ENCODE measurements at regions of chr1 and their contacts with region 1.

Region 1: GRCh38 chr1:96362623-96363022 is 359.0 kb upstream of the PTBP2 start:
- DNase-seq: peak; percentile 97
- H3K4me3 Mint-ChIP-seq: no peak overlapping the region
- H3K27ac Mint-ChIP-seq: peak overlapping the region; percentile 72
- H3K4me1 Mint-ChIP-seq: peaks cover 44% of the 10 kb centered on the region
- H3K27me3 Mint-ChIP-seq: no peaks in the 10 kb centered on the region
- CTCF ChIP-seq: no peak

Region 2: GRCh38 chr1:96309783-96310182 is 52.8 kb before region 1 on chr1:
- CTCF ChIA-PET with region 1: no interaction called
- POLR2A ChIA-PET with region 1: interaction called, 7 read pairs
- intact Hi-C with region 1: loop called (anchors 1 kb)
- DNase-seq: peak; percentile 86
- H3K4me3 Mint-ChIP-seq: no peak overlapping the region
- H3K27ac Mint-ChIP-seq: no peak overlapping the region
- H3K4me1 Mint-ChIP-seq: peaks cover 22% of the 10 kb centered on the region
- H3K27me3 Mint-ChIP-seq: no peaks in the 10 kb centered on the region
- CTCF ChIP-seq: no peak

Region 3: DNA sequence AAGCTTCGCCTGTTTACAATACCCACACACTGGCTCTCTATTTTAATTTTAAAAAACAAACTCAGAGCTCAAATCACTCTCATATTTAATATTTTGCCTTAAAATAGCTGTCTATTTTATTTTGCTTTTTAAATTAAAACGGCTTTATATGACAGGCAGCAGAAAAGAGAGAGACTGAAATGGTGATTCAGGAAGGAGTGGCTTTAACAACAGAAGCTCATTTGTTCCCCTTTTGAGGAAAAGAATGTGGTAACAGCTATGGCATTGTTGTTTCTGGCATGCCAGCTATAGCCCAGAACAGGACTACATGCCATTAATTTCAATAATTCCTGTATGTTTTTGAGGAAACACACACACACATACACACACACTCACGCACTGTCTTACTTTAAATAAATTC is 124.8 kb after region 1 on chr1:
- CTCF ChIA-PET with region 1: no interaction called
- POLR2A ChIA-PET with region 1: no interaction called
- intact Hi-C with region 1: loop called (anchors 5 kb)
- DNase-seq: peak; percentile 68
- H3K4me3 Mint-ChIP-seq: peak overlapping the region; percentile 38
- H3K27ac Mint-ChIP-seq: peak overlapping the region; percentile 79
- H3K4me1 Mint-ChIP-seq: peaks cover 34% of the 10 kb centered on the region
- H3K27me3 Mint-ChIP-seq: no peaks in the 10 kb centered on the region
- CTCF ChIP-seq: no peak

Region 4: GRCh38 chr1:96559707-96560596 is 197.3 kb after region 1 on chr1:
- CTCF ChIA-PET with region 1: no interaction called
- POLR2A ChIA-PET with region 1: no interaction called
- intact Hi-C with region 1: loop called (anchors 1 kb)
- DNase-seq: peak; percentile 83
- H3K4me3 Mint-ChIP-seq: peak overlapping the region; percentile 51
- H3K27ac Mint-ChIP-seq: peak overlapping the region; percentile 92
- H3K4me1 Mint-ChIP-seq: peaks cover 17% of the 10 kb centered on the region
- H3K27me3 Mint-ChIP-seq: no peaks in the 10 kb centered on the region
- CTCF ChIP-seq: no peak

Region 5: DNA sequence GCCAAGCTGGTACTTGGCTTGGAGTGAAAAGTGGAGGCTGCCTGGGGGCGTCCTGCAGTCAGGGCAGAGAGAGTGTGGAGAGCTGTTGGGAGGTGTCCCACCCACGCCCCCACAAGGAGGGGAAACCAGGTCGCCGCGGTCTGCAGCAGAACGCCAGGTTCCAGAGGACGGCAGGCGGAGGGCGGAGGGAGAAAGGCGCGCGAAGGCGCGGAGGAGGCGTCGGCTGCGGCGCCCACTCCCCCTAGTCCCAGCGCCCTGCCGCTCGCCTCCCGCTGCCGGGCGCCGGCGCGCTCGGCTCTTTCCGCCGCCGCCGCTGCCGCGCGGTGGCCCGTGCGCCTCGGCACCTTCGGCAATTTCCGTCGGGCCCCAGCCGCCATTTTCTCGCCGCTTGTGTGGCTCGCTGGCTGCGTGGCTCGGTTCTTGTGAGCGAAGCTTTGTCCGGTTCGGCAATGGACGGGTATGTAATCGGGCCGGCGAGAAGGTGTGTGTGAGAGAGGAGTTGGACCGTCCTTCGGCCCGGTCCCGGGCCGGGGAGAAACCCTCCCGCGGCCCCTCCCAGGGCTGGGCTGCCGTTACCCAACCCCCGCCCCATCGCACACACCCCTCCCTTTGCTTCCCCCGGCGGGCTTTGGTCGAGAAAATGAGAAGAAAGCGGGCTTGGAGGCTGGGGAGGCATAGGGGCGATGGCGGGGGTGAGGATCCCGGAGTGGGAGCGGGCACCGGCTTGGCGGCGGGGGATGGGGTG is 359.0 kb after region 1 on chr1 and contains the start of gene PTBP2:
- CTCF ChIA-PET with region 1: no interaction called
- POLR2A ChIA-PET with region 1: interaction called, 6 read pairs
- intact Hi-C with region 1: loop called (anchors 5 kb)
- DNase-seq: peak; percentile 77
- H3K4me3 Mint-ChIP-seq: peak within 1 kb of the TSS; percentile 89
- H3K27ac Mint-ChIP-seq: peak within 1 kb of the TSS; percentile 97
- H3K4me1 Mint-ChIP-seq: peaks cover 12% of the 10 kb centered on the region
- H3K27me3 Mint-ChIP-seq: no peaks in the 10 kb centered on the region
- CTCF ChIP-seq: no peak
- total RNA-seq, gene PTBP2: 15.8 and 17.3 TPM in 2 replicates

Measured in MCF 10A (cell line).